CD8-positive, alpha-beta T cell (primary cell): ENCODE measurements at regions of chr16 and their contacts with region 1.

Region 1: DNA sequence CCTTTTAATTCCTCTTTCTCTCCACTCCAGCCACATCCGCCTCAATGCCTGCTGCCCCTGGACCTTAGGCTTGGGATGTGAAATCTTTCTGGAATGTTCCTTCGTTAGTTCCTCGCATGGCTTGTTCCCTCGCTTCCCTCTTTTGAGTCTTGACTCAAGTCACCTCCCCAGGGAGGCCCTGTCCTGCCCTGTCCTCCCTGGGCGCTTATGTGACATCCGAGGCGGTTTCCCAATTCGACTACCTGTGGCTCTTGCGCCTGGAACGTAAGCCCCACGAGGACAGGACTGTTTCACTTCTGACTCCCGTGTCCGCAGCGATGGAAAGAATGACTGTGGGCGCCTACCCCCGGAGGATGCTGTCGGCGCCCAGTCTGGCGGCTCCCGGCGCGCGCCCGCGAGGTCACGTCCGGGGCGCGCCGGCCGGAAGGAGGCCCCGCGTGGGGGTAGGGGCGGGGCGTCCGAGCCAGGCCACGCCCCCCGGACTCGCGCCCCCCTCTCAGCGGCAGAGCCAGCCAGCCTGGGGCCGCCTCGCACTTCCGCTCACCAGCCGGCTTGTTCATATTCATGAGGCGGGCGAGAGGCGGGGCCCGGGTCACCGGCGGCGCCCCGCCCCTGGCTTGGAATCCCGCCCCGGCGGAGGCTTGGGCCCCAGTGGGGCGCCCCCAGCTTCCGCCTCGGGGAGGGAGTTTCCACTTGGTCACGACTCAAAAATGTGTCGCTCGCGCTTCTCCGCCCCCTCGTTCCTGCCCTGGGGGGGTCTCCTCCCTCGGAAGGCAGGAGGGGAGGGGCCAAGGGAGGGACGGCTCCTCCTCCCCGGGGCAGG is 8.4 kb upstream of the GLIS2 start:
- DNase-seq: peak; percentile 90 to 99 (median 96)
- ATAC-seq: peak; percentile 88
- H3K4me3 ChIP-seq: peak overlapping the region; percentile 57 to 71
- H3K4me3 Mint-ChIP-seq: peak overlapping the region; percentile 91
- H3K27ac ChIP-seq: peak overlapping the region; percentile 55 to 96
- H3K27ac Mint-ChIP-seq: peak overlapping the region; percentile 97
- H3K4me1 ChIP-seq: peaks cover 16% of the 10 kb centered on the region
- H3K4me1 Mint-ChIP-seq: peaks cover 26% of the 10 kb centered on the region
- H3K27me3 ChIP-seq: peaks cover 0 to 3% of the 10 kb centered on the region in 2 experiments
- H3K27me3 Mint-ChIP-seq: no peaks in the 10 kb centered on the region
- CTCF ChIP-seq: no peak

Region 2: DNA sequence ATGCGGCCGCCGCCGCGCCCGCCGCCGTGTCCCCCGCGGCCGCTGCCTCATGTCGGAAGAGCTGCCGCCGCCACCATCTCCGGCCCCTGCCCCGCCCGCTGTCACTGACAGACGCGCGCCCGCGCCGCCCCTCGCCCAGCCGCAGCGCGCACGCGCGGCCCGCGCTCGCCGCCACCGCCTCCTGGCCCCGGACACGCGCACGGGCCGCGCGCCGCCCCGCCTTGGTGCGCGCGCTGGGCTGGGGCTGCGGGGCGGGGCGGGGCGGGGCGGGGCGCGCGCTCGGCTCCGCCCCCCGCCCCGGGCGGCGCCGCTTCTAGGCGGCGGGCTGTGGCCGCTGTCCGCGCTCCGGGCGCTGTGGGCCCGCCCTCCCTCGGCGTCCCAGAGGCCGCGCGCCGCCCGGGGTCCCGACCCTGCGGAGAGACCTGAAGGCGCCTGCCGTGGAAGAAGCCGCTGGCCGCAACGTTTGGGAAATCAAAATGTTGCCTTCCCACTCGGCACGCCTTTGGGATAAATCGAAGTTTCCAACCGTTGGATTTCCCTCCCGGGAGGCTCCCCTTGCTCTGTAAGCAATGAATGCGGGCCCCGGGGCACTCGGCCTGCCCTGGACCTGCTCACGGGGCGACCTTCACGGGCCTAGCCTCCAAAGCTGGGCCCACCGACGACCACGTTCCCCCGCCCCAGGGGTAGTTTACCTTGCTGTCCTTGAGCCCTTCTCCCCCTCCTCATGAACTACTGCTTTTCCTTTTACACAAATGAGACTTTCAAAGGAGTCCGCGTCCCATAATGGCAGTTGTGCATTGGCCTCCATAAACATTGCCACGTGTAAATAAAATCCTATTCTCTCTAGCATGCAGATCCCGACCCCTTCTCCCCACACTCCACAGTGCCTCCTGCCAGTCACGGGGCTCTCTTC is 190.8 kb before region 1 on chr16 and contains the start of gene ADCY9:
- CTCF ChIA-PET with region 1: no interaction called
- POLR2A ChIA-PET with region 1: no interaction called
- intact Hi-C with region 1: loop called (anchors 2 to 5 kb)
- DNase-seq: peak; percentile 31 to 92 (median 74)
- ATAC-seq: peak; percentile 77
- H3K4me3 ChIP-seq: peak within 1 kb of the TSS; percentile 55 to 64
- H3K4me3 Mint-ChIP-seq: peak within 1 kb of the TSS; percentile 87
- H3K27ac ChIP-seq: peak within 1 kb of the TSS in 1 of 2 experiments; percentile 39
- H3K27ac Mint-ChIP-seq: peak within 1 kb of the TSS; percentile 52
- H3K4me1 ChIP-seq: peaks cover 33% of the 10 kb centered on the region
- H3K4me1 Mint-ChIP-seq: peaks cover 40% of the 10 kb centered on the region
- H3K27me3 ChIP-seq: no peaks in the 10 kb centered on the region
- H3K27me3 Mint-ChIP-seq: peaks cover 3% of the 10 kb centered on the region
- CTCF ChIP-seq: no peak
- total RNA-seq, gene ADCY9: 4.2 to 4.3 TPM

Region 3: DNA sequence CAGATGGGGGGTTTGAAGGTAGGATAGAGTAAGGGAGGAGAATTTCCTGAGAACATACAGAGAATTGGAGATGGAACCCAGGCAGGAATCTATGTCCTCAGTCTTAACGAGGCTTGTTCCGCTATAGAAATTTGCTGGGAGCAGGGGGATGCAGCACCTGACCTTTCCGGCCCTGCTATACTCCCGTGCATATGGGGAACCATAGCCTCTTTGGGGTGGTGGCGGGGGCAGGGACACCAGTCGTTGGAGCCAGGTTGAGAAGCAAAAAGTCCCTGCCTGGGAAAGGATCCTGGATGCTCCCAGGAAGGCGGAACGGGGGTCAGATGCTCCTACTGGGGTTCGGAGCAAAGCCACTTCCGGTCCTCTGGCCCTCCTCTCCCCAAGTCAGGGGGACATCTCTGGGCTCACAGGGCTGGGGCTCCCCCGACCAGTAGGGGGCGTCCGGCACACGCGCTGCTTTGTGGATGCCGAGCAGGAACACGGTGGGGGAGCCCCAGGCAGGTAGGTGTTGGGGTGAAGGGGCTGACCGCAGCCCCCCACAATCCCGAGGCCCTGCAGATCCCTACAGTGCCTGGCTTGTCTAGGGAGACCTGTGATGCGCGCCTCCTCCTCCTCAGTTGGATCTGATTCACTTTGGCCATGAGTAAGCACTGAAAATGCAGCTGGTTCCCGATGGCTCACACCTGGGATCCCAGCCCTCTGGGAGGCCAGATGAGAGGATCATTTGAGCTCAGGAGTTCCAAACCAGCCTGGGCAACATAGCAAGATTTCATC is 19.1 kb before region 1 on chr16:
- CTCF ChIA-PET with region 1: interaction called, 21 read pairs
- POLR2A ChIA-PET with region 1: interaction called, 3 read pairs
- intact Hi-C with region 1: no loop called
- DNase-seq: peak; percentile 56 to 91 (median 84)
- ATAC-seq: peak; percentile 99
- H3K4me3 ChIP-seq: no peak overlapping the region
- H3K4me3 Mint-ChIP-seq: no peak overlapping the region
- H3K27ac ChIP-seq: no peak overlapping the region
- H3K27ac Mint-ChIP-seq: no peak overlapping the region
- H3K4me1 ChIP-seq: peaks cover 8% of the 10 kb centered on the region
- H3K4me1 Mint-ChIP-seq: peaks cover 13% of the 10 kb centered on the region
- H3K27me3 ChIP-seq: peaks cover 0 to 3% of the 10 kb centered on the region in 2 experiments
- H3K27me3 Mint-ChIP-seq: peaks cover 12% of the 10 kb centered on the region
- CTCF ChIP-seq: peak; percentile 95

Region 4: DNA sequence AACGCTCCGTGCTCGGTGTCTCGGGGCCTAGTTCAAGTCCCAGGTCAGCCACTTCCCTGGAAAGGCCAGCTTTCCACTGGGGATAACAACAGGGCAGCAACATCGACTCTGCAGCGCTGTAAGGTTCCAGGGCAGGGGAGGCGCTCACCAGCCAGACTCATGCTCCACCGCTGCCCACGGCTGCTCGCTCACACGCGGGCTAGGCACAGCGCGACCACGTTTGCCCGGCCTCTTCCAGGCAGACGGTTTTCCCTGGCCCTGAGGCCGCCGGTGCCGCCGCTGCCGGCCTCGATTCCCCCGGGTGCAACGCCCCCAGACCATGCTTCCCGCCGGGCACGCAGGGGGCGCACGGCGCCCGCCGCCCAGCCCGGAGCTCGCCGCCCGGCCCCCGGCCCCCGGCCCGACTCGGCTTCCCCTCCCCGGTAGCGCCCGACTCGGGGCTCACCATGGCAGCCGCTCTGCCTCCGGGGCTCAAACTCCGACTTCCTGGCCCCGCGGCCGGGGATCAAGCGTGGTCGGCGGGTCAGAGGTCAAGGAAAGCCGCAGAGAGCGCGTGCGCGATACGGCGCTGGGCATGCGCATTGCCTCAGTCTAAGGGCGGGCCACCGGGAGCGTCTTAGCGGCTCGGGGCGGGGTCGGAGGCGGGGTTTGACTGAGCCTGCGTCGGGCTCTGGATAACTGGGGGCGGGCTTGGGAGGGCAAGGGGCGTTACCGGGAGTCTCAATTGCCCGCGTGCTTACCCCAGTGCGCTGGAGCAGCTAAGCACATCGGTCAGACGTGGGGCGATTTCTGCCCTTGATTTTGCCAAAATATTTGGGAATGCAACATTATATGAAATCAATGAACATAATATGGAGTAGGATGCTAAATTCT is 43.6 kb after region 1 on chr16 and contains the start of gene PAM16:
- CTCF ChIA-PET with region 1: interaction called, 4 read pairs
- POLR2A ChIA-PET with region 1: no interaction called
- intact Hi-C with region 1: loop called (anchors 1 kb)
- DNase-seq: peak; percentile 93 to 99 (median 98)
- ATAC-seq: peak; percentile 89
- H3K4me3 ChIP-seq: peak within 1 kb of the TSS; percentile 92
- H3K4me3 Mint-ChIP-seq: peak within 1 kb of the TSS; percentile 93
- H3K27ac ChIP-seq: peak within 1 kb of the TSS; percentile 80 to 82
- H3K27ac Mint-ChIP-seq: peak within 1 kb of the TSS; percentile 90
- H3K4me1 ChIP-seq: peaks cover 16% of the 10 kb centered on the region
- H3K4me1 Mint-ChIP-seq: peaks cover 42% of the 10 kb centered on the region
- H3K27me3 ChIP-seq: no peaks in the 10 kb centered on the region
- H3K27me3 Mint-ChIP-seq: no peaks in the 10 kb centered on the region
- CTCF ChIP-seq: no peak
- total RNA-seq, gene PAM16: 30.9 to 31.4 TPM

Region 5: GRCh38 chr16:4425378-4426020 is 118.1 kb after region 1 on chr16 and contains the start of gene DNAJA3:
- CTCF ChIA-PET with region 1: no interaction called
- POLR2A ChIA-PET with region 1: no interaction called
- intact Hi-C with region 1: loop called in 1 of 2 experiments (anchors 5 kb)
- DNase-seq: peak; percentile 80 to 97 (median 92)
- ATAC-seq: peak; percentile 84
- H3K4me3 ChIP-seq: peak within 1 kb of the TSS; percentile 83 to 100
- H3K4me3 Mint-ChIP-seq: peak within 1 kb of the TSS; percentile 96
- H3K27ac ChIP-seq: peak within 1 kb of the TSS; percentile 96 to 100
- H3K27ac Mint-ChIP-seq: peak within 1 kb of the TSS; percentile 99
- H3K4me1 ChIP-seq: peaks cover 23% of the 10 kb centered on the region
- H3K4me1 Mint-ChIP-seq: peaks cover 32% of the 10 kb centered on the region
- H3K27me3 ChIP-seq: no peaks in the 10 kb centered on the region
- H3K27me3 Mint-ChIP-seq: no peaks in the 10 kb centered on the region
- CTCF ChIP-seq: no peak
- total RNA-seq, gene DNAJA3: 13.8 to 17.4 TPM